ENCODE measurements at regions of chr15 and their contacts with region 1.

Region 1: GRCh38 chr15:81265944-81266775 is 57.8 kb downstream of the STARD5 start:
- DNase-seq: peak; percentile 63 to 84 (median 71)
- H3K4me3 ChIP-seq: peak overlapping the region; percentile 35
- H3K4me3 Mint-ChIP-seq: peak overlapping the region; percentile 4 to 82 (median 78)
- H3K27ac ChIP-seq: no peak overlapping the region
- H3K27ac Mint-ChIP-seq: peak overlapping the region in 4 of 8 donors; percentile 25 to 71 (median 48)
- H3K4me1 ChIP-seq: peaks cover 17% of the 10 kb centered on the region
- H3K4me1 Mint-ChIP-seq: peaks cover 16 to 19% (median 18%) of the 10 kb centered on the region in 3 donors
- H3K27me3 ChIP-seq: no peaks in the 10 kb centered on the region
- H3K27me3 Mint-ChIP-seq: peaks cover 3 to 11% of the 10 kb centered on the region in 2 donors

Region 2: GRCh38 chr15:80776420-80777045 is 489.6 kb before region 1 on chr15:
- CTCF ChIA-PET with region 1: no interaction called
- POLR2A ChIA-PET with region 1: no interaction called
- DNase-seq: peak; percentile 25 to 67 (median 47)
- H3K4me3 ChIP-seq: no peak overlapping the region
- H3K4me3 Mint-ChIP-seq: no peak overlapping the region
- H3K27ac ChIP-seq: no peak overlapping the region
- H3K27ac Mint-ChIP-seq: no peak overlapping the region
- H3K4me1 ChIP-seq: no peaks in the 10 kb centered on the region
- H3K4me1 Mint-ChIP-seq: peaks cover 3 to 9% (median 9%) of the 10 kb centered on the region in 3 donors
- H3K27me3 ChIP-seq: peaks cover 24% of the 10 kb centered on the region
- H3K27me3 Mint-ChIP-seq: peaks cover 35 to 38% of the 10 kb centered on the region in 2 donors

Region 3: GRCh38 chr15:80977627-80978036 is 288.5 kb before region 1 on chr15:
- CTCF ChIA-PET with region 1: interaction called, 15 read pairs
- POLR2A ChIA-PET with region 1: no interaction called
- DNase-seq: peak in 1 of 5 donors; percentile 53
- H3K4me3 ChIP-seq: no peak overlapping the region
- H3K4me3 Mint-ChIP-seq: no peak overlapping the region
- H3K27ac ChIP-seq: no peak overlapping the region
- H3K27ac Mint-ChIP-seq: peak overlapping the region in 6 of 8 donors; percentile 44 to 87 (median 57)
- H3K4me1 ChIP-seq: peaks cover 6% of the 10 kb centered on the region
- H3K4me1 Mint-ChIP-seq: peaks cover 42 to 57% (median 52%) of the 10 kb centered on the region in 3 donors
- H3K27me3 ChIP-seq: no peaks in the 10 kb centered on the region
- H3K27me3 Mint-ChIP-seq: no peaks in the 10 kb centered on the region

Region 4: GRCh38 chr15:81106560-81106959 is 159.6 kb before region 1 on chr15:
- CTCF ChIA-PET with region 1: interaction called, 22 read pairs
- POLR2A ChIA-PET with region 1: interaction called, 3 read pairs
- DNase-seq: peak in 3 of 5 donors; percentile 4 to 28 (median 4)
- H3K4me3 ChIP-seq: no peak overlapping the region
- H3K4me3 Mint-ChIP-seq: no peak overlapping the region
- H3K27ac ChIP-seq: no peak overlapping the region
- H3K27ac Mint-ChIP-seq: no peak overlapping the region
- H3K4me1 ChIP-seq: no peaks in the 10 kb centered on the region
- H3K4me1 Mint-ChIP-seq: peaks cover 0 to 2% (median 0%) of the 10 kb centered on the region in 3 donors
- H3K27me3 ChIP-seq: no peaks in the 10 kb centered on the region
- H3K27me3 Mint-ChIP-seq: peaks cover 16 to 60% of the 10 kb centered on the region in 2 donors

Region 5: DNA sequence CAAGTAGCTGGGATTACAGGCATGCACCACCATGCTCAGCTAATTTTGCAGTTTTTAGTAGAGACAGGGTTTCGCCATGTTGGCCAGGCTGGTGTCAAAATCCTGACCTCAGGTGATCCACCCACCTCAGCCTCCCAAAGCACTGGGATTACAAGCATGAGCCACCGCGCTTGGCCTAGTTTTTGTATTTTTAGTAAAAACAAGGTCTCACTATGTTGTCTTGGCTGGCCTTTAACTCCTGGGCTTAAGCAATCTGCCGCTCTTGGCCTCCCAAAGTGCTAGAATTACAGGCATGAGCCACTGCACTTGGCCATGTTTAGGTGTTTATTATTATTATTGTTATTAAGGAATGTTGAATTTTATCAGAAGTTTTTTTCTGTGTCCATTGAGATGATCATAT is 54.8 kb before region 1 on chr15:
- CTCF ChIA-PET with region 1: no interaction called
- POLR2A ChIA-PET with region 1: no interaction called
- DNase-seq: no peak
- H3K4me3 ChIP-seq: no peak overlapping the region
- H3K4me3 Mint-ChIP-seq: no peak overlapping the region
- H3K27ac ChIP-seq: no peak overlapping the region
- H3K27ac Mint-ChIP-seq: no peak overlapping the region
- H3K4me1 ChIP-seq: no peaks in the 10 kb centered on the region
- H3K4me1 Mint-ChIP-seq: no peaks in the 10 kb centered on the region
- H3K27me3 ChIP-seq: no peaks in the 10 kb centered on the region
- H3K27me3 Mint-ChIP-seq: peaks cover 11 to 40% of the 10 kb centered on the region in 2 donors

Region 6: GRCh38 chr15:81286621-81287121 is 20.5 kb after region 1 on chr15:
- CTCF ChIA-PET with region 1: interaction called, 37 read pairs
- POLR2A ChIA-PET with region 1: no interaction called
- DNase-seq: peak in 2 of 5 donors; percentile 48 to 74
- H3K4me3 ChIP-seq: peak overlapping the region; percentile 21
- H3K4me3 Mint-ChIP-seq: peak overlapping the region; percentile 4 to 78 (median 73)
- H3K27ac ChIP-seq: no peak overlapping the region
- H3K27ac Mint-ChIP-seq: peak overlapping the region; percentile 89 to 98 (median 96)
- H3K4me1 ChIP-seq: peaks cover 75% of the 10 kb centered on the region
- H3K4me1 Mint-ChIP-seq: peaks cover 67 to 78% (median 75%) of the 10 kb centered on the region in 3 donors
- H3K27me3 ChIP-seq: no peaks in the 10 kb centered on the region
- H3K27me3 Mint-ChIP-seq: no peaks in the 10 kb centered on the region

Region 7: GRCh38 chr15:81323944-81324881 is 58.1 kb after region 1 on chr15 and contains the start of gene STARD5:
- CTCF ChIA-PET with region 1: interaction called, 13 read pairs
- POLR2A ChIA-PET with region 1: no interaction called
- DNase-seq: peak; percentile 92 to 96 (median 94)
- H3K4me3 ChIP-seq: peak within 1 kb of the TSS; percentile 86
- H3K4me3 Mint-ChIP-seq: peak within 1 kb of the TSS; percentile 85 to 100 (median 95)
- H3K27ac ChIP-seq: peak within 1 kb of the TSS; percentile 62
- H3K27ac Mint-ChIP-seq: peak within 1 kb of the TSS; percentile 41 to 98 (median 92)
- H3K4me1 ChIP-seq: peaks cover 20% of the 10 kb centered on the region
- H3K4me1 Mint-ChIP-seq: peaks cover 23 to 42% (median 26%) of the 10 kb centered on the region in 3 donors
- H3K27me3 ChIP-seq: no peaks in the 10 kb centered on the region
- H3K27me3 Mint-ChIP-seq: no peaks in the 10 kb centered on the region
- total RNA-seq, gene STARD5: 4.4 to 5.8 TPM

Region 8: GRCh38 chr15:81410318-81410753 is 144.2 kb after region 1 on chr15:
- CTCF ChIA-PET with region 1: interaction called, 13 read pairs
- POLR2A ChIA-PET with region 1: no interaction called
- DNase-seq: peak in 2 of 5 donors; percentile 32 to 47
- H3K4me3 ChIP-seq: no peak overlapping the region
- H3K4me3 Mint-ChIP-seq: no peak overlapping the region
- H3K27ac ChIP-seq: no peak overlapping the region
- H3K27ac Mint-ChIP-seq: no peak overlapping the region
- H3K4me1 ChIP-seq: no peaks in the 10 kb centered on the region
- H3K4me1 Mint-ChIP-seq: peaks cover 10 to 11% (median 11%) of the 10 kb centered on the region in 3 donors
- H3K27me3 ChIP-seq: no peaks in the 10 kb centered on the region
- H3K27me3 Mint-ChIP-seq: peaks cover 4 to 38% of the 10 kb centered on the region in 2 donors